Naive thymus-derived CD4-positive, alpha-beta T cell (primary cell): ENCODE measurements at regions of chr15 and their contacts with region 1.

Region 1: DNA sequence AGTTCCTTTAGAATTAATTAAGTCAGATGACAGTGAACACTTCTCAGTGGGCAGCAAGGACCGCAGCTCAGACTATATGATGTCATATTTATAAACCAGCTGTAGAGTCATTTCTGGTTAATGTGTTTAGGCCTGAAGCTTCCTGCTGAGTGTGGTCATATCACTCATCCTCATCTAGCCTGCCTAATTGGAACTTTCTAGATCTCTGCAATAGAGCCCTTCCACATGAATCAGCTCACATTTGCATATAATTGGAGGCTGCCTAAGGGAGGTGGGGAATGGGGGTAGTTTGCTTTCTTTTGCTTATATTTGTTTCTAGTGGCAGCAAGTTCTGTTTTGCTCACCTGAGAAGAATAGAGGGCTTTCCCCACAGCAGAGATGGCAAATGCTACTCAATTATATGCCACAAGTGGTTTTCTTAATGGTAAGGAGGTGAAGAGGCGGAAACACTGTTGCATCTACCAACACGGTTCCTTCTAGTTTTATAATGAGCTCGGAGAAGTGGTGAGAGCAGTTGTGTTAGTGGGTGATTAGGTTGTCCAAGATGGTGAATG is 148.1 kb downstream of the KLHL25 start:
- DNase-seq: peak in 1 of 9 donors; percentile 35
- ATAC-seq: peak; percentile 78
- H3K4me3 ChIP-seq: no peak overlapping the region
- H3K4me3 Mint-ChIP-seq: peak overlapping the region in 2 of 10 donors; percentile 21 to 51
- H3K27ac ChIP-seq: no peak overlapping the region
- H3K27ac Mint-ChIP-seq: peak overlapping the region in 6 of 9 donors; percentile 10 to 81 (median 48)
- H3K4me1 ChIP-seq: peaks cover 8 to 35% of the 10 kb centered on the region in 2 donors
- H3K4me1 Mint-ChIP-seq: peaks cover 28 to 45% (median 38%) of the 10 kb centered on the region in 7 donors
- H3K27me3 ChIP-seq: no peaks in the 10 kb centered on the region
- H3K27me3 Mint-ChIP-seq: no peaks in the 10 kb centered on the region

Region 2: DNA sequence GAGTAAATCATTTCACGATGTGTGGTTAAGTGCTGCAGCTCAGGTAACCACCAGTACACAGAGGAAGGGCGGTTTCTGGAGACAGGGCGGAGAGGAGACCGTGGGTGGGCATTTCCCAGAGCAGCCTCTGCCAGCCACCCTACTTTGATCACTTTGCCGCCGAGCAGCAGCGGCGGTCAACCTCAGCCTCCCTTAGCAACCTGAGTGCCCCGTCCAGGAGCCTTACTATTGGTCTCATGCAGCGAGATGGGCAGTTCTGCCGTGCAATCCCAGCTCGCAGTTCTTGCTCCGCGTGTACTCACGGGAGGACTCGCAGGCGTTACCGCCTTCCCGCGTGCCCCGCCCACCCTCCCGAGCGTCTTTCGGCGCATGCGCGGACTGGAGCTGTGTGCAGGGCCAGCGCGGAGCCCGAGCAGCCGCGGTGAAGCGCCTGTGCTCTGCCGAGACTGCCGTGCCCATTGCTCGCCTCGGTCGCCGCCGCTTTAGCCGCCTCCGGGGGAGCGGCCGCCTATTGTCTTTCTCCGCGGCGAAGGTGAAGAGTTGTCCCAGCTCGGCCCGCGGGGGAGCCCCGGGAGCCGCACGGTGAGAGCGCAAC is 266.3 kb before region 1 on chr15 and contains the start of gene AKAP13:
- CTCF ChIA-PET with region 1: no interaction called
- POLR2A ChIA-PET with region 1: no interaction called
- intact Hi-C with region 1: no loop called
- DNase-seq: peak; percentile 78 to 93 (median 88)
- ATAC-seq: peak; percentile 87
- H3K4me3 ChIP-seq: peak within 1 kb of the TSS; percentile 62
- H3K4me3 Mint-ChIP-seq: peak within 1 kb of the TSS; percentile 86 to 96 (median 92)
- H3K27ac ChIP-seq: peak within 1 kb of the TSS; percentile 79
- H3K27ac Mint-ChIP-seq: peak within 1 kb of the TSS; percentile 84 to 96 (median 94)
- H3K4me1 ChIP-seq: peaks cover 16 to 23% of the 10 kb centered on the region in 2 donors
- H3K4me1 Mint-ChIP-seq: peaks cover 29 to 65% (median 47%) of the 10 kb centered on the region in 7 donors
- H3K27me3 ChIP-seq: no peaks in the 10 kb centered on the region
- H3K27me3 Mint-ChIP-seq: peaks cover 0 to 2% (median 0%) of the 10 kb centered on the region in 5 donors
- total RNA-seq, gene AKAP13: 170 to 400 (median 241) TPM

Region 3: GRCh38 chr15:85430406-85431204 is 216.0 kb before region 1 on chr15:
- CTCF ChIA-PET with region 1: no interaction called
- POLR2A ChIA-PET with region 1: no interaction called
- intact Hi-C with region 1: no loop called
- DNase-seq: no peak
- ATAC-seq: no peak
- H3K4me3 ChIP-seq: no peak overlapping the region
- H3K4me3 Mint-ChIP-seq: no peak overlapping the region
- H3K27ac ChIP-seq: no peak overlapping the region
- H3K27ac Mint-ChIP-seq: no peak overlapping the region
- H3K4me1 ChIP-seq: peaks cover 0 to 6% of the 10 kb centered on the region in 2 donors
- H3K4me1 Mint-ChIP-seq: peaks cover 28 to 69% (median 58%) of the 10 kb centered on the region in 7 donors
- H3K27me3 ChIP-seq: no peaks in the 10 kb centered on the region
- H3K27me3 Mint-ChIP-seq: no peaks in the 10 kb centered on the region

Region 4: GRCh38 chr15:85625856-85626255 is 20.8 kb before region 1 on chr15:
- CTCF ChIA-PET with region 1: interaction called, 3 read pairs
- POLR2A ChIA-PET with region 1: no interaction called
- intact Hi-C with region 1: loop called in 1 of 2 experiments (anchors 2 kb)
- DNase-seq: peak in 4 of 9 donors; percentile 11 to 38 (median 28)
- ATAC-seq: peak; percentile 79
- H3K4me3 ChIP-seq: no peak overlapping the region
- H3K4me3 Mint-ChIP-seq: peak overlapping the region; percentile 40 to 80 (median 65)
- H3K27ac ChIP-seq: no peak overlapping the region
- H3K27ac Mint-ChIP-seq: peak overlapping the region; percentile 5 to 88 (median 73)
- H3K4me1 ChIP-seq: peaks cover 26 to 44% of the 10 kb centered on the region in 2 donors
- H3K4me1 Mint-ChIP-seq: peaks cover 48 to 71% (median 58%) of the 10 kb centered on the region in 7 donors
- H3K27me3 ChIP-seq: no peaks in the 10 kb centered on the region
- H3K27me3 Mint-ChIP-seq: no peaks in the 10 kb centered on the region